ENCODE measurements at regions of chr12 and their contacts with region 1.

Region 1: DNA sequence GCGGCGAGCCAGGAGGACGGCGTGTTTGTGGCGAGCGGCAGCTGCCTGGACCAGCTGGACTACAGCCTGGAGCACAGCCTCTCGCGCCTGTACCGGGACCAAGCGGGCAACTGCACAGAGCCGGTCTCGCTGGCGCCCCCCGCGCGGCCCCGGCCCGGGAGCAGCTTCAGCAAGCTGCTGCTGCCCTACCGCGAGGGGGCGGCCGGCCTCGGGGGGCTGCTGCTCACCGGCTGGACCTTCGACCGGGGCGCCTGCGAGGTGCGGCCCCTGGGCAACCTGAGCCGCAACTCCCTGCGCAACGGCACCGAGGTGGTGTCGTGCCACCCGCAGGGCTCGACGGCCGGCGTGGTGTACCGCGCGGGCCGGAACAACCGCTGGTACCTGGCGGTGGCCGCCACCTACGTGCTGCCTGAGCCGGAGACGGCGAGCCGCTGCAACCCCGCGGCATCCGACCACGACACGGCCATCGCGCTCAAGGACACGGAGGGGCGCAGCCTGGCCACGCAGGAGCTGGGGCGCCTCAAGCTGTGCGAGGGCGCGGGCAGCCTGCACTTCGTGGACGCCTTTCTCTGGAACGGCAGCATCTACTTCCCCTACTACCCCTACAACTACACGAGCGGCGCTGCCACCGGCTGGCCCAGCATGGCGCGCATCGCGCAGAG is 873 bp downstream of the PLXNC1 start:
- DNase-seq: peak; percentile 72 to 83 (median 79)
- H3K4me3 ChIP-seq: peak overlapping the region; percentile 65 to 93 (median 78)
- H3K27ac ChIP-seq: peak overlapping the region in 1 of 2 experiments; percentile 47
- H3K4me1 ChIP-seq: peaks cover 11 to 60% (median 48%) of the 10 kb centered on the region in 4 experiments
- H3K27me3 ChIP-seq: peaks cover 0 to 3% (median 0%) of the 10 kb centered on the region in 5 experiments

Region 2: GRCh38 chr12:93943766-93944165 is 205.5 kb before region 1 on chr12:
- CTCF ChIA-PET with region 1: no interaction called
- POLR2A ChIA-PET with region 1: no interaction called
- DNase-seq: no peak
- H3K4me3 ChIP-seq: no peak overlapping the region
- H3K27ac ChIP-seq: no peak overlapping the region
- H3K4me1 ChIP-seq: no peaks in the 10 kb centered on the region
- H3K27me3 ChIP-seq: no peaks in the 10 kb centered on the region

Region 3: GRCh38 chr12:94133964-94134795 is 15.1 kb before region 1 on chr12:
- CTCF ChIA-PET with region 1: interaction called, 41 read pairs
- POLR2A ChIA-PET with region 1: interaction called, 4 read pairs
- DNase-seq: peak; percentile 69 to 81 (median 76)
- H3K4me3 ChIP-seq: no peak overlapping the region
- H3K27ac ChIP-seq: no peak overlapping the region
- H3K4me1 ChIP-seq: no peaks in the 10 kb centered on the region
- H3K27me3 ChIP-seq: no peaks in the 10 kb centered on the region

Region 4: GRCh38 chr12:94180558-94181296 is 31.5 kb after region 1 on chr12:
- CTCF ChIA-PET with region 1: interaction called, 193 read pairs
- POLR2A ChIA-PET with region 1: interaction called, 8 read pairs
- DNase-seq: peak in 2 of 3 donors; percentile 68 to 74
- H3K4me3 ChIP-seq: no peak overlapping the region
- H3K27ac ChIP-seq: no peak overlapping the region
- H3K4me1 ChIP-seq: peaks cover 6 to 47% (median 40%) of the 10 kb centered on the region in 4 experiments
- H3K27me3 ChIP-seq: no peaks in the 10 kb centered on the region

Region 5: DNA sequence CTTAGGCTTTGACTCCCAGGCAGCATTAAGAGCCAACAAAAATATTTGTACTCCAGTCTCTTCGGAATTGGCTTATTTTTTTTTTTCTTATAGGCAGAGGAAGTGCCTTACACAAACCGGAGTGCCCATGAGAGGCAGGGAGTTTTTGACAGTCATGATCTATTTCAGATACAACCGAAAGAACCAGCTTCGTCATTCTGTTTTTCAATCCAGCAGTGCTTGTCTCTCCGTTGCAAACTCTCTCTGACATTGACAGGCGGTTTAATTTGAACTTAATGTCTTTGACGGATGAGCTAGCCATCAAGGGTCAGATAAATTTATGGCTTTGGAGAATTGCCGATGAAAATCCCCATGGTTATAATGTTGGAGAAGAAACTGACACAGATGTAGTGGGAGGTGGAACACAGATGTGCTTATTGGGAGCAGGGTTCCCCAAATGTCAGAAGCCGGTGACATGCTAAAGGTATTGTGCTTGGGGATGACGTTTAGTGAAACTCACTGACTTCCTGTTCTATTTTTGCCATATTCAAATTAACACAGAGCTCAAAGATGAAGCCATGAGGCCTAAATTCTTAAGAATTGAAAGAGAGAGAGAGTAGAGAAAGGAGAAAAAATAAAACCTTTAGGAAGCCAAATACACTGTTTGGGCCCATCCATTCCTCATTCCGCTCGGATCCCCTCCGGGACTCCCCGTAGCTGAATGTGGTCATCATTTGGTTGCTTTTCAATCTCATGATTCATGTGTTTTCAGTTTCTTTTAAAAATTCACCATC is 58.8 kb after region 1 on chr12:
- CTCF ChIA-PET with region 1: interaction called, 12 read pairs
- POLR2A ChIA-PET with region 1: interaction called, 4 read pairs
- DNase-seq: peak; percentile 78 to 92 (median 90)
- H3K4me3 ChIP-seq: peak overlapping the region in 6 of 7 experiments; percentile 40 to 69 (median 54)
- H3K27ac ChIP-seq: peak overlapping the region; percentile 84 to 91
- H3K4me1 ChIP-seq: peaks cover 54 to 67% (median 59%) of the 10 kb centered on the region in 4 experiments
- H3K27me3 ChIP-seq: no peaks in the 10 kb centered on the region

Region 6: DNA sequence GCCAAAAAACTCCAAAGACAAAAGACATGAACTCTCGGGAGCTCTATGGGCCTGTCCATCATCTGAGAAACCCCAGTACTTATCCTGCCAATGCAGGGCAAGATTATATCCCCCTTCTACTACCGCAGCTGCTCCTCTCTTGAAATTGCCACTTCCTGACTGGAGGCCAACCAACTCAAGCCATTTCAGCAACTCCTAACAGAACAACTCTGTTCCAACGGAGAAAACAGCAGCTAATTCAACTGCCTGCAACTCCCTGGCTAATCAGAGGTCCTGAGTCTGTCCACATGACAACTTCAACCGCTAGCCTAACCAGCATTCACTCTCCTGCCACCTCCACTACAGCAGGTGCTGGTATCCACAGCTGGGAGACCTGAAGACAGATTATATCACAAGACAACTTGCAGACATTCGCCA is 286.3 kb after region 1 on chr12:
- CTCF ChIA-PET with region 1: interaction called, 36 read pairs
- POLR2A ChIA-PET with region 1: no interaction called
- DNase-seq: peak; percentile 39 to 84 (median 69)
- H3K4me3 ChIP-seq: peak overlapping the region in 5 of 7 experiments; percentile 2 to 54 (median 28)
- H3K27ac ChIP-seq: peak overlapping the region; percentile 4 to 65
- H3K4me1 ChIP-seq: peaks cover 2 to 25% (median 20%) of the 10 kb centered on the region in 4 experiments
- H3K27me3 ChIP-seq: no peaks in the 10 kb centered on the region

Measured in common myeloid progenitor, CD34-positive (primary cell).